Panc1 (cell line): ENCODE measurements at regions of chr15 and their contacts with region 1.

Region 1: GRCh38 chr15:71575474-71576045 is 234.8 kb upstream of the NR2E3 start:
- DNase-seq: no peak
- ATAC-seq: no peak
- H3K4me3 ChIP-seq: no peak overlapping the region
- H3K27ac ChIP-seq: no peak overlapping the region
- H3K4me1 ChIP-seq: no peaks in the 10 kb centered on the region
- H3K27me3 ChIP-seq: no peaks in the 10 kb centered on the region
- CTCF ChIP-seq: peak; percentile 65; the same call in 1 of the 2 replicates

Region 2: GRCh38 chr15:71508081-71508682 is 67.4 kb before region 1 on chr15:
- CTCF ChIA-PET with region 1: no interaction called
- POLR2A ChIA-PET with region 1: no interaction called
- in situ Hi-C with region 1: no loop called
- intact Hi-C with region 1: no loop called
- DNase-seq: no peak
- ATAC-seq: no peak
- H3K4me3 ChIP-seq: no peak overlapping the region
- H3K27ac ChIP-seq: no peak overlapping the region
- H3K4me1 ChIP-seq: no peaks in the 10 kb centered on the region
- H3K27me3 ChIP-seq: no peaks in the 10 kb centered on the region
- CTCF ChIP-seq: no peak

Region 3: GRCh38 chr15:71634820-71635560 is 59.4 kb after region 1 on chr15:
- CTCF ChIA-PET with region 1: no interaction called
- POLR2A ChIA-PET with region 1: no interaction called
- in situ Hi-C with region 1: no loop called
- intact Hi-C with region 1: loop called (anchors 5 kb)
- DNase-seq: no peak
- ATAC-seq: no peak
- H3K4me3 ChIP-seq: no peak overlapping the region
- H3K27ac ChIP-seq: no peak overlapping the region
- H3K4me1 ChIP-seq: no peaks in the 10 kb centered on the region; the same call in 1 of the 2 replicates
- H3K27me3 ChIP-seq: no peaks in the 10 kb centered on the region
- CTCF ChIP-seq: no peak

Region 4: DNA sequence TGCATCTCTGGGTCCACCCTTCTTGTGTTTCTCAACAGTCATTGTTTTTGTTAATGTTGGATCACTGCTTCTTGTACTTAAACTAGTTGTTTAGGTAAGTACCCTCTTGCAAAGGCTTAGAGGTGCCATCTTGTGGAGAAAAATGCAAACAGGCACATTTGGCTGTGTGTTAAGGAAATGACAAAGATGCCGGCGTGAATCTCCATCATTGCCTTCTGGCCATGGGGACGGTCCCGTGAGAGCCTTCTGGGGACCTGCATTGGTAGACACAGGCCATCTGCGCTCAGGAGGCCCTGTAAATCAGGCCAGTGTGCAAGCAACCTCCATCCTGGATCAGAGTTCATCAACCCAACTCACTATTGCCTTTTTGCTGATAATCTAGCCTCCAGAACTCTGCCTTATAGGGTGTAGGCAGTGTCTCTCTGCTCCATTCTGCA is 76.2 kb after region 1 on chr15:
- CTCF ChIA-PET with region 1: no interaction called
- POLR2A ChIA-PET with region 1: no interaction called
- in situ Hi-C with region 1: no loop called
- intact Hi-C with region 1: loop called (anchors 5 kb)
- DNase-seq: peak; percentile 28
- ATAC-seq: peak; percentile 80
- H3K4me3 ChIP-seq: no peak overlapping the region
- H3K27ac ChIP-seq: no peak overlapping the region
- H3K4me1 ChIP-seq: no peaks in the 10 kb centered on the region
- H3K27me3 ChIP-seq: no peaks in the 10 kb centered on the region
- CTCF ChIP-seq: peak; percentile 75

Region 5: DNA sequence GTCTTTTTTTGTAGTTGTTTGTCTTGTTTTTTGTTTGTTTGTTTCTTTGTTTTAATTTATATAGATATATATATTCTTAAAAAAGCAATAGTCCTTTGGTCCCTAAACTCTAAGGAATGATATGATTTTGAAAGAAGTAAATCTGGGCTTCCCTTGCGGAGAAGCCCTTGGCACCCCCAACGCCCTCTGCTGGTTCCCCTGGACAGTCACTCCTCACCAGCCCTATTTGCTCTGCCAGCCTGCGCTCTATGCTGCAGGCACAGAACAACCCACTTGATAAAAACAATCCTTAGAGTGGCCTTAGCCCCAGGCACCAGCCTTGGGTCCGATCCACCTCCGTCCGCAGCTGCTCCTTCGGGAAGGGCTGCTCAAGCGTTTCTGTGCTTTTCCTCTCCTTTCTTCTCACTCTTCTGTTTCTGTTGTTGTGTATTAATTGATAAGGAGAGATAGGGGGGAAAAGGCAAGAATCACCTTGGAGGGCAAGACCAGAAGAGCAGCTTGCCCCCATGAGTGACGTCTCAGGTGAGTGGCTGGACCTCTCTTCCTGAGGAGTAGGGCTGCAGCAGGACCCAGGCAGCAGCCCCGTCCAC is 710.5 kb after region 1 on chr15:
- CTCF ChIA-PET with region 1: no interaction called
- POLR2A ChIA-PET with region 1: no interaction called
- in situ Hi-C with region 1: no loop called
- intact Hi-C with region 1: no loop called
- DNase-seq: peak; percentile 7
- ATAC-seq: peak; percentile 85
- H3K4me3 ChIP-seq: no peak overlapping the region
- H3K27ac ChIP-seq: no peak overlapping the region
- H3K4me1 ChIP-seq: no peaks in the 10 kb centered on the region
- H3K27me3 ChIP-seq: no peaks in the 10 kb centered on the region
- CTCF ChIP-seq: peak; percentile 84